HEK293 (cell line): ENCODE measurements at regions of chr5 and their contacts with region 1.

Region 1: GRCh38 chr5:174418928-174419796 is 305.2 kb upstream of the MSX2 start:
- H3K4me3 ChIP-seq: no peak overlapping the region; the same call in 1 of the 2 replicates
- H3K27ac ChIP-seq: peak overlapping the region; percentile 49; the same call in 1 of the 2 replicates
- H3K4me1 ChIP-seq: peaks cover 7% of the 10 kb centered on the region; the same call in 1 of the 2 replicates
- CTCF ChIP-seq: peak; percentile 94

Region 2: GRCh38 chr5:174188295-174188694 is 230.9 kb before region 1 on chr5:
- CTCF ChIA-PET with region 1: no interaction called
- POLR2A ChIA-PET with region 1: no interaction called
- H3K4me3 ChIP-seq: no peak overlapping the region
- H3K27ac ChIP-seq: no peak overlapping the region
- H3K4me1 ChIP-seq: no peaks in the 10 kb centered on the region
- CTCF ChIP-seq: no peak

Region 3: DNA sequence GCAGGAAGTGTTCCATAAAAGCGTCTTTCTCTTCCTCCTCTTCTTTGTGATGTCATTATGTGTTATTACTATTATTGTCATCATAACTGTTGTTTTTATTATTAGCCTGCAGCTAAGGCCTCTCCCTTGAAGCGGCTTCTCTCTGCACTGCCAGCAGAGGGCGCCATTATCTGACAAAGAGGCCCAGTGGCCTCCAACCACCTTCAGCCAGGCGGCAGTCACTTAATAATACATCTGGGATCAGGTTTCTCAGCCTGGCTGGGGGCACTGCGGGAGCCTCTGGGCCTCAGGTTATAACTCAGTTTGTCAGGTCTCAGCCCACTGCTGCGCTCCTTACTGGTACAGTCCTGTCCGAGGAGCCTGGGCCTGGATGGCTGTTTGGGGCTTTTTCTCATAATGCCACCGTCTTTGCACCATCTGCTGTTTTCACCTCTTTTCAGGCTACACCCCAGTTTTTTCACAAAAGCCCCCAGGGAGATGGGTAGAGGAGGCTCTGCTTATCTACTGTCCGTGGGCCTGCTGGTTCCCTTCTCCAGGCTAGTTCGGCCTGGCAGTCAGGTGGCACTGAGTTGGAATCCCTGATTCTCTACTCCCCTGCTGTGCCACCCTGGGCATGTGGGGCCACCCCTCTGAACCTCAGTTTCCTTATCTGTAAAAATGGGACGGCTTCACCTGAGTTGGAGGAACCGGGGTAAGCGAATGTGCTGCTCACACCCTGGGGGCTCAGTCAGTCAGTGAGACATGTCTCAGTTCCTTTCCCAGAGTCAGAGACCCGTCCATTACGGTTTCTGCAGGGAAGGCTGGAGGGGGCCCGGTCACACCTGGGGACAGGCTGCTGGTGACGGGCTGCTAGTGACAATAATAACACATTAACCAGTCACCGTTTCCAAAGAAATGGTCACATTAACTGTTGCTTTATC is 91.6 kb before region 1 on chr5:
- CTCF ChIA-PET with region 1: interaction called, 28 read pairs
- POLR2A ChIA-PET with region 1: interaction called, 4 read pairs
- H3K4me3 ChIP-seq: no peak overlapping the region
- H3K27ac ChIP-seq: peak overlapping the region; percentile 83
- H3K4me1 ChIP-seq: peaks cover 10% of the 10 kb centered on the region
- CTCF ChIP-seq: peak; percentile 95

Region 4: GRCh38 chr5:174409070-174409469 is 10.1 kb before region 1 on chr5:
- CTCF ChIA-PET with region 1: interaction called, 16 read pairs
- POLR2A ChIA-PET with region 1: no interaction called
- H3K4me3 ChIP-seq: no peak overlapping the region
- H3K27ac ChIP-seq: no peak overlapping the region
- H3K4me1 ChIP-seq: peaks cover 25% of the 10 kb centered on the region
- CTCF ChIP-seq: no peak

Region 5: GRCh38 chr5:174581479-174581878 is 162.3 kb after region 1 on chr5:
- CTCF ChIA-PET with region 1: interaction called, 10 read pairs
- POLR2A ChIA-PET with region 1: no interaction called
- H3K4me3 ChIP-seq: no peak overlapping the region
- H3K27ac ChIP-seq: no peak overlapping the region
- H3K4me1 ChIP-seq: no peaks in the 10 kb centered on the region
- CTCF ChIP-seq: no peak; the same call in none of the 2 replicates

Region 6: GRCh38 chr5:174735498-174736330 is 316.6 kb after region 1 on chr5:
- CTCF ChIA-PET with region 1: interaction called, 12 read pairs
- POLR2A ChIA-PET with region 1: no interaction called
- H3K4me3 ChIP-seq: no peak overlapping the region
- H3K27ac ChIP-seq: no peak overlapping the region
- H3K4me1 ChIP-seq: peaks cover 3% of the 10 kb centered on the region
- CTCF ChIP-seq: 0 out of 2 replicates have a peak, but pooled peaks have one; percentile 29